ENCODE measurements at regions of chr12 and their contacts with region 1.

Region 1: DNA sequence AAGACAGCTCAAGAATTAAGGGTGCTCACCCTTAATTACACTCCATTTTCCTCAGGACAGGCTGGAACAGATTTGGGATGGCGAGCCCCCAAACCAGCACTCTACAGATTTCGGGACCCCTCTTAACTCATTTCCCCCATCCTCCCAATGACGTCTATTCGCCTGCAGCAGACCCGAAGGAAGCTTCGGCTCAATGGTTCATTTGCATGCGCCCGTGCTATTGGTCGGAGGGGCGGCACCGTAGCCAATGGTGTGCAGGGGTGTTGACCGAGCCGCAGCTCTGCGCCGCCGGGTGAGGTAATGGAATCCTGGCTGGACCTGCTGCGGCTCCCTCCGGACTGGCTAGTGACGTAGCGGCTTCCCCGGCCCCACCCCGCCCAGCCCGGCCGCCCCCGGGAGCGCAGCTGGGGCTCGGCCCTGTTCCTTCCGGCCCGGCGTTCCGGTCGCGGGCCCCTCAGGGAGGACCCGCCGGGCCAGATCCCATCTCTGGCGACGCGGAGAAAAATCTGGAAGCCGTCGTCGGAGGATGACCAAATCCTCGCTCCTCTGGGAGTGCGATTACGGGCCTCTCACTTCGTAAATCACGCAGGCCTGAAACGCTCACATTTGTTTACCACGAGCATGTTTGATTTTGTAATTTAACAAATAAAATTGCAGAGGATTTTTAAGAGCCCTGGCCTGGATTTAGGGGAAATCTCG is 18.3 kb upstream of the NR4A1 start:
- DNase-seq: peak; percentile 97
- CTCF ChIP-seq: no peak

Region 2: GRCh38 chr12:51293696-51294095 is 739.3 kb before region 1 on chr12:
- in situ Hi-C with region 1: no loop called
- DNase-seq: no peak
- CTCF ChIP-seq: no peak

Region 3: DNA sequence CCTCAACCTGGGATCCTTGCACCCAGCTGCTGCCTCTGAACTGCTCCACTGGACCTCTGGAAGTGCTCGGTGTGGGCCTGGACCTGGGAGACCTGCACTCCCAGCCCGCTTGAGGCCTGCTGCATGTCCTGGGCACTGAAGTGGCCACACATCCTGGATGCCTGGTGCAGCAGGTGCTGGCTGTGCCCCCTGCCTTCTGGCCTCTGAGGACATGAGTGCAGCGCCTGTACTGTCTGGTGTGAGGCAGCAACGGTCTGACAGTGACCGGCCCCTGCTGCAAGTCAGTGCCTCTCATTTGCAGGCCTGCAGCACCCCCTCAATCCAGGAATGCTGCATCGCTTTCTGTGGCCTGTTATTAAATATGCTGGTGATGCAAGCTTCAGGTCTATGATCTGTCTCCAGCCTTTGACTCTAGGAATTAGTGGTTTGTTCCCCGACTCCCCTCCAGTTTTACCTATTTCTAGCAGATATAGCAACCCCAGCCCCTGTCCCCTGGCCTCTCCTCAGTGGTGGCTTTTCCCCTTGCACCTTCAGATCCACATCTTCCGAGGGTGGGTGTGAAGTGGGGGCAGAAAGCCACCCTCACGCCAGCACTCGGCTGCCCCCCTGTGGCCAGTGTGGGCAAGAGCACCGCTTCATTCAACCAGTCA is 50.2 kb after region 1 on chr12:
- in situ Hi-C with region 1: loop called (anchors 10 kb)
- DNase-seq: peak; percentile 88
- CTCF ChIP-seq: peak; percentile 91

Measured in GM13977 (cell line).